BJ (cell line): ENCODE measurements at regions of chr11 and their contacts with region 1.

Region 1: GRCh38 chr11:78416305-78417178 is 1.1 kb downstream of the GAB2 start:
- DNase-seq: peak; percentile 51
- H3K4me3 ChIP-seq: peak overlapping the region; percentile 70
- H3K27me3 ChIP-seq: no peaks in the 10 kb centered on the region
- CTCF ChIP-seq: peak; percentile 63

Region 2: DNA sequence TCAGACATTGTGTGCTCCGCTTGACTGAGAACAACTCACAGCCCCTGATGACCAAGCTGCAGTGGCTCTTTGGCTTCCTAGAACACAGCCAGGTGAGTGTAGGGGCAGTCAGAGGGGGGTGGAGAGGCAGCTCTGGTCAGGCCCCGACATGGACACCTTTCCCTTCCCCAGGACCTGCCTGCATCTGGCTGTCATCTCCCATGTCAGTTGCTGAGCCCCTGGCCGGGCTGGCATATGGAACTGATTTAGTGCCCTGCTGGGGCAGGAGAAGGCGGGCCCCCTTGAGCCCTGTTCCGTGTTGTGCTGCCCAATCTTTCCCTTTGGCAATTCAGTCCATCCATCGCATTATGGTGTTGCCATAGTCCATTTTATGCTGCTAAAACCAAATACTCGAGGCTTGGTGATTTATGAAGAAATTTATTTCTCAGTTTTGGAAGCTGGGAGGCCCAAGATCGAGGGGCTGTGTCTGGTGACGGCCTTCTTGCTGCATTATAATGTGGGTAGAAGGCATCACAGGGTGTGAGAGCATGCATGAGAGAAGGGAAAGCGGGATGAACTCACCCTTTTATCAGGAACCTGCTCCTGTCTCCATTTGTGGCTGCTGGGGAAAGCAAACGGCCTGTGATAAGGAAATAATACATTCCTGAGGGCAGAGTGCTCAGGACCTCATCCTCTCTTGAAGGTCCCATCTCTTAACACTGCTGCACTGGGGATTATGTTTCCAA is 208.8 kb before region 1 on chr11:
- CTCF ChIA-PET with region 1: no interaction called
- POLR2A ChIA-PET with region 1: no interaction called
- DNase-seq: no peak
- H3K4me3 ChIP-seq: no peak overlapping the region
- H3K27me3 ChIP-seq: no peaks in the 10 kb centered on the region
- CTCF ChIP-seq: no peak

Region 3: DNA sequence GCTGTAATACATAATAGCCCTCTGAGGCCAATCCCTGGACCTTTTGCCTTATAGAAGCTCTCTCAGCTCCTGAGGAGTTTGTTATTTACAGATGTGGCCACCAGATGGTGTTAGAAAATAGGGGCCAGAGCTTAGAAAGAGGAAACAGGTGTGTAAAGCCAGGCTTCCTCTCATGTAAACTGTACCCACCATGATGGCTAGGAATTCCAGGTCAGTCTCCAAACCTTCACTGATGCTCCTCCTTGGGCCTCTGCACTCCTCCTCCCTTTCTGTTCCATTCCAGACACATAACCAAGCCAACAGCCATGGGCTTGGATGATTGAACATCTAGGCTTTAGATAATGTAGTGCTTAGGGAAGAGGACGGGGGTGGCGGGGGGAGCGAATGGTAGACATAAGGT is 188.1 kb before region 1 on chr11:
- CTCF ChIA-PET with region 1: interaction called, 10 read pairs
- POLR2A ChIA-PET with region 1: interaction called, 16 read pairs
- DNase-seq: no peak
- H3K4me3 ChIP-seq: no peak overlapping the region
- H3K27me3 ChIP-seq: no peaks in the 10 kb centered on the region
- CTCF ChIP-seq: peak; percentile 53

Region 4: DNA sequence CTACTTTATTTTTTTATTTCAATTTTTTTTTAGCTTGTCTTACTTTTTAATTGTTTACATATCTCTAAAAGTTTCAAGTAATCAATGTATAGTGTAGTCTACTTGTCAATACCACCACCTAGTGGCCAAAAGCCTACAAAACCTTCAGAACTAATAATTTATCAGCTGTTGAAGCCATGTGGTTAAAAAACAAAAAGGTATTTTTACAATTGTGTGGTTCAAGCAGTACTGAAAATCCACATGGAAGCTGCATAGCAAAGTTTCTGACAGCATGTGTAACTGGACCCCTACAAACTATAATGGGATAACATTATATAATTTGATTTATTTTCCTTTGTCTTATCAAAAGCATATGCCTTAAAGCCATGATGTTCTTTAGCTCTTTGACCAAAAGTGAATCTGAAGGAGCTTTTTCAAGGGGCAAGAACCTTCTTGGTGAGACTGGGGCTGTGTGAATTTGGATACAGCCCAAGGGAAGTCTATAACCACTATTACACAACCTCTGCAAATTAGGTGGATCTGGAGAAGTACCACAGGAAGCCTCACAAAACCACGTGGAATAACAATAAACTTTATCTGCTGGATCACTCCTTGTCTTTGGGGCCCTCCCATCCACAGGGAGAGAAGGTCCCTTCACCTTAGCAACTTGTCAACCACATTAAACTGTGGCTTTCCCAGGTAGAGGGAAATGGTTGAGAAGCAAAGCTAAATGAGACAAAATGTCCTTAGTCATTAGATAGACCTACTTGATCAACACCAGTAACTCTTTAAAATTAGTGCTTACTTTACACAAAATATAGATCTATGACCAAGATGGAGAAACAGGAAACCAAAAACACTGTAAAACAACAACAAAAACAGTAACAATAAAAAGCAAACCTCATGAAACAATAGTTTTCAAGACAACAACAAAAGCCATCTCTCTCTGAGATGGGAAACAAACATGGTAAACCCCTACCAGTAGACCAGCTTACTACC is 148.2 kb after region 1 on chr11:
- CTCF ChIA-PET with region 1: interaction called, 50 read pairs
- POLR2A ChIA-PET with region 1: interaction called, 16 read pairs
- DNase-seq: peak; percentile 55
- H3K4me3 ChIP-seq: no peak overlapping the region
- H3K27me3 ChIP-seq: no peaks in the 10 kb centered on the region
- CTCF ChIP-seq: peak; percentile 59

Region 5: GRCh38 chr11:78574386-78575381 is 158.1 kb after region 1 on chr11 and contains the start of gene NARS2:
- CTCF ChIA-PET with region 1: interaction called, 10 read pairs
- POLR2A ChIA-PET with region 1: no interaction called
- DNase-seq: peak; percentile 74
- H3K4me3 ChIP-seq: peak within 1 kb of the TSS; percentile 86
- H3K27me3 ChIP-seq: no peaks in the 10 kb centered on the region
- CTCF ChIP-seq: no peak
- polyA plus RNA-seq, gene NARS2: 5.9 and 12.0 TPM in 2 replicates